CD14-positive monocyte (primary cell): ENCODE measurements at regions of chr17 and their contacts with region 1.

Region 1: GRCh38 chr17:41548844-41549595 is 20.9 kb upstream of the KRT19 start:
- DNase-seq: peak; percentile 65 to 71 (median 66)
- H3K4me3 ChIP-seq: peak overlapping the region; percentile 0 to 64 (median 21)
- H3K4me3 Mint-ChIP-seq: peak overlapping the region; percentile 66 to 80
- H3K27ac ChIP-seq: no peak overlapping the region
- H3K27ac Mint-ChIP-seq: peak overlapping the region in 3 of 7 donors; percentile 48 to 80 (median 60)
- H3K4me1 ChIP-seq: peaks cover 16 to 20% of the 10 kb centered on the region in 2 donors
- H3K4me1 Mint-ChIP-seq: peaks cover 21% of the 10 kb centered on the region
- H3K27me3 ChIP-seq: no peaks in the 10 kb centered on the region
- H3K27me3 Mint-ChIP-seq: peaks cover 1 to 15% (median 8%) of the 10 kb centered on the region in 3 donors
- CTCF ChIP-seq: peak; percentile 100

Region 2: GRCh38 chr17:40803617-40804082 is 745.4 kb before region 1 on chr17:
- intact Hi-C with region 1: loop called in 1 of 2 experiments (anchors 2 kb)
- DNase-seq: peak; percentile 51 to 66 (median 59)
- H3K4me3 ChIP-seq: no peak overlapping the region
- H3K4me3 Mint-ChIP-seq: no peak overlapping the region
- H3K27ac ChIP-seq: no peak overlapping the region
- H3K27ac Mint-ChIP-seq: no peak overlapping the region
- H3K4me1 ChIP-seq: no peaks in the 10 kb centered on the region
- H3K4me1 Mint-ChIP-seq: no peaks in the 10 kb centered on the region
- H3K27me3 ChIP-seq: peaks cover 35 to 42% of the 10 kb centered on the region in 2 donors
- H3K27me3 Mint-ChIP-seq: peaks cover 29 to 38% (median 33%) of the 10 kb centered on the region in 3 donors
- CTCF ChIP-seq: peak; percentile 89

Region 3: DNA sequence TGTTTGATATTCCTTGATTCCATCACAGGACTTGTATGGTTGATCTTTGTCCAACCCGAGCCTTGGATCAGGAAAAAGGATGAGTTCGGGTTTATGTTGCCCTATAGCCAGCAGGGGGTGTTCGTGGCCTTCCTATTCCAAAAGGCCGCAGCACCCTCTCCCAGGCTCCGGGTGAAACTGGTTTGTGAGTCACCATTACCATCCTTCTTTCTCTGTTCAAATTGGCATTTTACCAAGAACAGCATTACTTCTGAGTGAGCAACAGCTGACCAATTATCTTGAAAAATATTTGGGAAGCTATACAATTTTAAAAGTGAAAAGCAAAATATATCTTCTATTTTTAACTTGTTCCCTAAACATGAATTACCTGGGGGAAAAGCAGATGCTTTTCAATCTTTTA is 639.7 kb before region 1 on chr17:
- intact Hi-C with region 1: loop called (anchors 10 kb)
- DNase-seq: peak; percentile 87 to 94 (median 93)
- H3K4me3 ChIP-seq: no peak overlapping the region
- H3K4me3 Mint-ChIP-seq: no peak overlapping the region
- H3K27ac ChIP-seq: peak overlapping the region in 1 of 2 donors; percentile 28
- H3K27ac Mint-ChIP-seq: peak overlapping the region in 2 of 7 donors; percentile 26 to 81
- H3K4me1 ChIP-seq: peaks cover 42 to 44% of the 10 kb centered on the region in 2 donors
- H3K4me1 Mint-ChIP-seq: peaks cover 35% of the 10 kb centered on the region
- H3K27me3 ChIP-seq: peaks cover 4 to 9% of the 10 kb centered on the region in 2 donors
- H3K27me3 Mint-ChIP-seq: peaks cover 14 to 23% (median 17%) of the 10 kb centered on the region in 3 donors
- CTCF ChIP-seq: peak; percentile 93

Region 4: GRCh38 chr17:41496820-41497408 is 52.1 kb before region 1 on chr17:
- intact Hi-C with region 1: loop called in 1 of 2 experiments (anchors 5 kb)
- DNase-seq: peak; percentile 90 to 93 (median 91)
- H3K4me3 ChIP-seq: peak overlapping the region in 1 of 3 experiments; percentile 58
- H3K4me3 Mint-ChIP-seq: peak overlapping the region; percentile 59 to 60
- H3K27ac ChIP-seq: peak overlapping the region; percentile 93 to 97
- H3K27ac Mint-ChIP-seq: peak overlapping the region; percentile 91 to 98 (median 96)
- H3K4me1 ChIP-seq: peaks cover 61 to 68% of the 10 kb centered on the region in 2 donors
- H3K4me1 Mint-ChIP-seq: peaks cover 71% of the 10 kb centered on the region
- H3K27me3 ChIP-seq: no peaks in the 10 kb centered on the region
- H3K27me3 Mint-ChIP-seq: peaks cover 2 to 7% (median 5%) of the 10 kb centered on the region in 3 donors
- CTCF ChIP-seq: peak; percentile 91

Region 5: DNA sequence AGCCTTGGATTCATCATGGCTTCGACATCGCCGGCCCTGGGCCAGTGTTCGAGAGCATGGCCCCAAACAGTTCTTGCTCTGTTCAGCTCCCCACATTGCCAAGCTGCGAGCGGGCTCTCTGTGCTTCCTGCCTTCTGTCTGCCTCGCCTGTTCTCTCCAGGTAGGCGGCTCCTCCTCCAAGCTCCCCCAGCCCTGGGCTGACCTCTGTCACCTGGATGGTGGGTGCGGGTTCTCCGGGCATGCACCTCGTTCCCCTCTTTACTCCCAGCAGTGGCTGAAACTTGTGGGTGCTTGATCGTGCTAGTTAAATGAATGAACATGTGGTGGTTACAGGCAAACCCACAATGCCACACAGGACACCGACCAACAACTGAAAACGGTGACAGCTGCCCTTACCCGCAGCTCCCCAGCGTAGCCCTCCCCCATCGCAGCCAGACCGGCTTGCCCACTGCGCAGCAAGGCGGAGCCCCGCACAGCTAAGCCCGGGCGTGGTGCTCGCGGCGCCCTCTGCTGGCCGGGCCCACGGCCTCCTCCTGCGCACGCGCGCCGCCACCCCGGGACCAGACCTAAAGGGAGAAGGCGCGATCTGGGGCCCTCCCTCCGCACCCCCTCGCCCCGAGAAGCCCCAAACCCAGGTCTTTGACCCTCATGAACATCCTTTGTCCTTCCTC is 116.7 kb after region 1 on chr17:
- intact Hi-C with region 1: loop called in 1 of 2 experiments (anchors 5 kb)
- DNase-seq: peak; percentile 72 to 83 (median 80)
- H3K4me3 ChIP-seq: peak overlapping the region; percentile 18 to 73 (median 45)
- H3K4me3 Mint-ChIP-seq: peak overlapping the region; percentile 81 to 93
- H3K27ac ChIP-seq: peak overlapping the region; percentile 34 to 47
- H3K27ac Mint-ChIP-seq: peak overlapping the region; percentile 68 to 93 (median 87)
- H3K4me1 ChIP-seq: peaks cover 33 to 36% of the 10 kb centered on the region in 2 donors
- H3K4me1 Mint-ChIP-seq: peaks cover 32% of the 10 kb centered on the region
- H3K27me3 ChIP-seq: no peaks in the 10 kb centered on the region
- H3K27me3 Mint-ChIP-seq: peaks cover 16 to 18% (median 17%) of the 10 kb centered on the region in 3 donors
- CTCF ChIP-seq: peak; percentile 95

Region 6: DNA sequence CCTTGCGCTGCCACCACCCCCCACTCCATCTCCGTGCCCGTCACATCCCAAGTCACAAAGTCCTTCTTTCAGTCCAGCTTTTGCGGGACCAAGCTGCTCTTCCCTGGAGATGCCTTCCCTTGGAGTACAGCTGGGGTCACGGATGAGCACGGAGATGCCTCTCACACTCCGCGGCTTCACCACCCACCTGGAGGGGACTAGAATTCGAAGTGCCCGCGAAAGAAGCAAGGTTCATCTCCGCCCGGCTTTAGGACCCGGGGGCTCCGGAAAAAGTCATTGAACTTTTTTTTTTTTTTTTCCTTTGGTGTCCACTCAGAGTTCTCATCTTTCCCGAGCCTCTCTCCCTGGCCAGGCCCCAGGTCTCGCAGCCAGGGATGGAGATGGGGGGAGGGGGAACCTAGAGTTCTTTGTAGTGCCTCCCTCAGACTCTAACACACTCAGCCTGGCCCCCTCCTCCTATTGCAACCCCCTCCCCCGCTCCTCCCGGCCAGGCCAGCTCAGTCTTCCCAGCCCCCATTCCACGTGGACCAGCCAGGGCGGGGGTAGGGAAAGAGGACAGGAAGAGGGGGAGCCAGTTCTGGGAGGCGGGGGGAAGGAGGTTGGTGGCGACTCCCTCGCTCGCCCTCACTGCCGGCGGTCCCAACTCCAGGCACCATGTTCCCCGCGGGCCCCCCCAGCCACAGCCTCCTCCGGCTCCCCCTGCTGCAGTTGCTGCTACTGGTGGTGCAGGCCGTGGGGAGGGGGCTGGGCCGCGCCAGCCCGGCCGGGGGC is 263.5 kb after region 1 on chr17 and contains the start of gene FKBP10:
- intact Hi-C with region 1: no loop called
- DNase-seq: no peak
- H3K4me3 ChIP-seq: peak within 1 kb of the TSS; percentile 23 to 80 (median 33)
- H3K4me3 Mint-ChIP-seq: peak within 1 kb of the TSS; percentile 77 to 94
- H3K27ac ChIP-seq: no peak within 1 kb of the TSS
- H3K27ac Mint-ChIP-seq: peak within 1 kb of the TSS in 2 of 7 donors; percentile 73 to 87
- H3K4me1 ChIP-seq: peaks cover 16 to 24% of the 10 kb centered on the region in 2 donors
- H3K4me1 Mint-ChIP-seq: peaks cover 14% of the 10 kb centered on the region
- H3K27me3 ChIP-seq: peaks cover 9 to 46% of the 10 kb centered on the region in 2 donors
- H3K27me3 Mint-ChIP-seq: peaks cover 28 to 54% (median 41%) of the 10 kb centered on the region in 3 donors
- CTCF ChIP-seq: no peak
- polyA plus RNA-seq, gene FKBP10: not detected